ENCODE measurements at regions of chr7 and their contacts with region 1.

Region 1: GRCh38 chr7:20310963-20311742 is 19.5 kb upstream of the ITGB8 start:
- DNase-seq: no peak
- H3K4me3 ChIP-seq: no peak overlapping the region
- H3K27ac ChIP-seq: no peak overlapping the region
- H3K27me3 ChIP-seq: no peaks in the 10 kb centered on the region
- CTCF ChIP-seq: peak; percentile 48

Region 2: GRCh38 chr7:19747740-19748339 is 563.3 kb before region 1 on chr7:
- CTCF ChIA-PET with region 1: interaction called, 10 read pairs
- POLR2A ChIA-PET with region 1: no interaction called
- DNase-seq: no peak
- H3K4me3 ChIP-seq: no peak overlapping the region
- H3K27ac ChIP-seq: no peak overlapping the region
- H3K27me3 ChIP-seq: no peaks in the 10 kb centered on the region
- CTCF ChIP-seq: peak; percentile 62

Region 3: GRCh38 chr7:19982841-19983835 is 328.0 kb before region 1 on chr7:
- CTCF ChIA-PET with region 1: interaction called, 49 read pairs
- POLR2A ChIA-PET with region 1: no interaction called
- DNase-seq: peak; percentile 48
- H3K4me3 ChIP-seq: no peak overlapping the region
- H3K27ac ChIP-seq: no peak overlapping the region
- H3K27me3 ChIP-seq: no peaks in the 10 kb centered on the region
- CTCF ChIP-seq: peak; percentile 63

Region 4: DNA sequence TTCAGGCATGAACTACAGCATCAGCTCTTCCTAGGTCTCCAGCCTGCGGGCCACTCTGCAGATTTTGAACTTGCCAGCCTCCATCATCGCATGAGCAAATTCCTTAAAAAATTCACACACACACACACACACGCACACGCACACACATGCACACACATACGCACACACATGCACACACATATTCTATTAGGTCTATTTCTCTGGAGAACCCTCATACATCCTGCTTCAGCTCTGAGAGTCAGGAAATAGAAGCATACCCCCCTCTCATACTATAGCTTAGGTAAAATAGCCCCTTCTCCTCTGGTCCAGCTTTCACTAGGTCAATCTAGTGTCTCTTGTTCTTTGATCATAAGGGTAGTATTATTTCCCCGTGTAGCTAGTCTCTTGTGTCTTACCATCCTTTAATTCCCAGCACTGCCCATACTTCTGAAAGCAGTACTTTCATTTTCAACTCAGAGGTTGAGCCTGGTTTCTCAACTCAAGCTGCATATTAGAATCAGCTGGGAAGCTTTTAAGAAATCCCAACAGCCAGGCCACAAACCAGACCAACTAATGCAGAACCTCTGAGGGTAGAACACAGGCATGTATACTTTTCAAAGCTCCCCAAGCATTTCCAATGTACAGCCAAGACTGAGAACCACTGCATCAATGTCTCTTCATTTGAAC is 11.4 kb before region 1 on chr7:
- CTCF ChIA-PET with region 1: interaction called, 11 read pairs
- POLR2A ChIA-PET with region 1: no interaction called
- DNase-seq: no peak
- H3K4me3 ChIP-seq: no peak overlapping the region
- H3K27ac ChIP-seq: peak overlapping the region; percentile 41
- H3K27me3 ChIP-seq: no peaks in the 10 kb centered on the region
- CTCF ChIP-seq: no peak

Measured in AG04450 (cell line).